Calu3 (cell line): ENCODE measurements at regions of chr3 and their contacts with region 1.

Region 1: DNA sequence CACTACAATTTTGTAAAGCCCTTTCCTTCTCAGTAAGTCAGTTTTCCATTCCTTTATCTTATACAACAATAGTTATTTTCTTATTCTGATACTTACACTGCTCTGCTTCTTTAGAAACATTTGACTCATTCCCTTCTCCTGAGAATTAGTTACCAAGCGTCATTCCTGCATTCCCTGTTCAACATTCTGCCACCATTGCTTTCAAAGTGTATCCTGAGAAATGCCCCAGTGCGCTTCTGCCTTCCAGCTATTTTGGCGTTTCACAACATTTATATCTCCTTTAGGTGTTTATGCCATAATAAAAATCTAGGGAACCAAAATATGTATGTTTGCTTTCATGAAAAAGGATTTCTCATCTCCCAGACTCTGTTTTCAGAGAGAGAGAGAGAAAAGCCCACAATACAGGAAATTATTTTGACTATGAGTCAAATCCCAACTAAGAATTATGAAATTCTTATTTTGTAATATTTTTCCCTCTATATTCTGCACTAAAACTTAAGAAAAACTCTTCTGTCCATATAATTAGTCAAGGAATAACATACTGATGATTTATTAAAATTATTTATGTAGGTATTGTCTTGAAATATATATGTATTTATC is 118.2 kb upstream of the RAP2B start:
- DNase-seq: no peak
- H3K4me3 Mint-ChIP-seq: peak overlapping the region; percentile 29
- H3K27ac Mint-ChIP-seq: peak overlapping the region; percentile 84
- H3K4me1 Mint-ChIP-seq: peaks cover 66% of the 10 kb centered on the region
- H3K27me3 Mint-ChIP-seq: no peaks in the 10 kb centered on the region
- CTCF ChIP-seq: no peak

Region 2: GRCh38 chr3:153096611-153097202 is 52.9 kb after region 1 on chr3:
- CTCF ChIA-PET with region 1: interaction called, 9 read pairs
- intact Hi-C with region 1: loop called (anchors 2 kb)
- DNase-seq: peak; percentile 77
- H3K4me3 Mint-ChIP-seq: peak overlapping the region; percentile 39
- H3K27ac Mint-ChIP-seq: peak overlapping the region; percentile 66
- H3K4me1 Mint-ChIP-seq: peaks cover 71% of the 10 kb centered on the region
- H3K27me3 Mint-ChIP-seq: no peaks in the 10 kb centered on the region
- CTCF ChIP-seq: no peak

Region 3: DNA sequence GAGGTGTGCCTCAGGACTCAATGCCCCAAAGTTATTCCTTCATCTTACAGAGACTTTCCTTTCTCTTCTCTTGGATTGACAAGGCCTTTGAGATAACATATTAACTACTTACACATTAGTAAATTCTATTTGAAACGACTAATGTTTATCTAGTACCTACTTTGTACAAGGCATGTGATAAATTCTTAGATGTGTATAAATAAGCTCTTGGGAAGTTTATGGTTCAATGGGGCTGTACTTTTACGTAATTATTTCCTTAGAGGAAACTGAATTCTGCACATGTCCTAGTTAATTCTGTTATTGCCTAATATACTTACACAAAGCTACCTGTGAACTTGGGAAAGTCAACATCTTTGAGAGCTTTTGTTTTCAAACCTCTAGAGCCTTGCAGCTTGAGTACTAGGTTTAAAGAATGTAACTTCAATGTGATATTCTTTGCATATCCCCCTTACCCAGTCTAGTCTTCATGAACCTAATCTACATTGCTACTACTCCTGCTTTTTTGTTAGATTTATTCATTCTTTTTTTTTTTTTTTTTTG is 59.6 kb after region 1 on chr3:
- CTCF ChIA-PET with region 1: interaction called, 12 read pairs
- intact Hi-C with region 1: no loop called
- DNase-seq: no peak
- H3K4me3 Mint-ChIP-seq: no peak overlapping the region
- H3K27ac Mint-ChIP-seq: peak overlapping the region; percentile 62
- H3K4me1 Mint-ChIP-seq: peaks cover 27% of the 10 kb centered on the region
- H3K27me3 Mint-ChIP-seq: no peaks in the 10 kb centered on the region
- CTCF ChIP-seq: no peak

Region 4: GRCh38 chr3:153138276-153139210 is 94.7 kb after region 1 on chr3:
- CTCF ChIA-PET with region 1: interaction called, 3 read pairs
- intact Hi-C with region 1: loop called (anchors 1 kb)
- DNase-seq: peak; percentile 92
- H3K4me3 Mint-ChIP-seq: peak overlapping the region; percentile 28
- H3K27ac Mint-ChIP-seq: peak overlapping the region; percentile 99
- H3K4me1 Mint-ChIP-seq: peaks cover 75% of the 10 kb centered on the region
- H3K27me3 Mint-ChIP-seq: no peaks in the 10 kb centered on the region
- CTCF ChIP-seq: no peak

Region 5: GRCh38 chr3:153291056-153291685 is 247.3 kb after region 1 on chr3:
- CTCF ChIA-PET with region 1: interaction called, 16 read pairs
- intact Hi-C with region 1: loop called (anchors 1 kb)
- DNase-seq: peak; percentile 47
- H3K4me3 Mint-ChIP-seq: no peak overlapping the region
- H3K27ac Mint-ChIP-seq: no peak overlapping the region
- H3K4me1 Mint-ChIP-seq: peaks cover 37% of the 10 kb centered on the region
- H3K27me3 Mint-ChIP-seq: no peaks in the 10 kb centered on the region
- CTCF ChIP-seq: peak; percentile 71

Region 6: GRCh38 chr3:153439777-153440176 is 395.9 kb after region 1 on chr3:
- CTCF ChIA-PET with region 1: interaction called, 3 read pairs
- intact Hi-C with region 1: loop called (anchors 5 kb)
- DNase-seq: no peak
- H3K4me3 Mint-ChIP-seq: no peak overlapping the region
- H3K27ac Mint-ChIP-seq: no peak overlapping the region
- H3K4me1 Mint-ChIP-seq: peaks cover 30% of the 10 kb centered on the region
- H3K27me3 Mint-ChIP-seq: no peaks in the 10 kb centered on the region
- CTCF ChIP-seq: no peak

Region 7: GRCh38 chr3:153595186-153595815 is 551.5 kb after region 1 on chr3:
- CTCF ChIA-PET with region 1: interaction called, 6 read pairs
- intact Hi-C with region 1: loop called (anchors 1 kb)
- DNase-seq: peak; percentile 32
- H3K4me3 Mint-ChIP-seq: no peak overlapping the region
- H3K27ac Mint-ChIP-seq: no peak overlapping the region
- H3K4me1 Mint-ChIP-seq: peaks cover 44% of the 10 kb centered on the region
- H3K27me3 Mint-ChIP-seq: no peaks in the 10 kb centered on the region
- CTCF ChIP-seq: peak; percentile 87